Natural killer cell (primary cell): ENCODE measurements at regions of chr16 and their contacts with region 1.

Region 1: DNA sequence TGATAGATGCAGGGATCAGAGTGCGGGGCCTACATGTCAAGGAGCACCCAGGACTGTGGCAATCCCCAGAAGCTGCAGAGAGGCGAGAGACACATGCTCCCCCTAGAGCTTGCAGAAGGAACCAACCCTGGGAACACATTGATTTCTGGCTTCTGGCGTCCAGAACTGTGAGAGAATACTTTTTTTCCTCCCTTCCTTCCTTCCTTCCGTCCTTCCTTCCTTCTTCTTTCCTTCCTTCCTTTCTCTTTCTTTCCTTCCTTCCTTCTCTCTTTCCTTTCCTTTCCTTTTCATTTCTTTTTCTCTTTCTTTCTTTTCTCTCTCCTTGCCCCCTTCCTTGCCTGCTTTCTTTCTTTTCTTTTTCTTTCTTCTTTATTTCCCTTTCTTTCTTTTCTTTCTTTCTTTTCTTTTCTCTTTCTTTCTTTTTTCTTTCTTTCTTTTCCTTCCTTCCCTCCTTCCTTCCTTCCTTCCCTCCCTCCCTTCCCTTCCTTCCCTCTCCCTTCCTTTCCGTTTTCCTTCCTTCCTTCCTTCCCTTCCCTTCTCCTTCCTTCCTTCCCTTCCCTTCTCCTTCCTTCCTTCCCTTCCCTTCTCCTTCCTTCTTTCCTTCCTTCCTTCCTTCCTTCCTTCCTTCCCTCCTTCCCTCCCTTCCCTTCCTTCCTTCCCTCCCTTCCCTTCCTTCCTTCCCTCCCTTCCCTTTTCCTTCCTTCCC is 134.3 kb downstream of the HAPSTR1 start:
- DNase-seq: peak in 1 of 2 donors; percentile 4
- ATAC-seq: no peak
- H3K4me3 ChIP-seq: no peak overlapping the region
- H3K4me3 Mint-ChIP-seq: no peak overlapping the region
- H3K27ac ChIP-seq: no peak overlapping the region
- H3K27ac Mint-ChIP-seq: no peak overlapping the region
- H3K4me1 ChIP-seq: no peaks in the 10 kb centered on the region
- H3K4me1 Mint-ChIP-seq: no peaks in the 10 kb centered on the region
- H3K27me3 ChIP-seq: no peaks in the 10 kb centered on the region
- H3K27me3 Mint-ChIP-seq: peaks cover 0 to 3% of the 10 kb centered on the region in 2 donors
- CTCF ChIP-seq: no peak

Region 2: GRCh38 chr16:7849841-7850240 is 1375.9 kb before region 1 on chr16:
- intact Hi-C with region 1: no loop called
- DNase-seq: no peak
- ATAC-seq: no peak
- H3K4me3 ChIP-seq: no peak overlapping the region
- H3K4me3 Mint-ChIP-seq: no peak overlapping the region
- H3K27ac ChIP-seq: no peak overlapping the region
- H3K27ac Mint-ChIP-seq: no peak overlapping the region
- H3K4me1 ChIP-seq: no peaks in the 10 kb centered on the region
- H3K4me1 Mint-ChIP-seq: no peaks in the 10 kb centered on the region
- H3K27me3 ChIP-seq: no peaks in the 10 kb centered on the region
- H3K27me3 Mint-ChIP-seq: no peaks in the 10 kb centered on the region
- CTCF ChIP-seq: no peak

Region 3: GRCh38 chr16:9159839-9160550 is 65.8 kb before region 1 on chr16:
- intact Hi-C with region 1: loop called (anchors 10 kb)
- DNase-seq: peak; percentile 26 to 67
- ATAC-seq: peak in 1 of 3 donors; percentile 70
- H3K4me3 ChIP-seq: no peak overlapping the region
- H3K4me3 Mint-ChIP-seq: no peak overlapping the region
- H3K27ac ChIP-seq: no peak overlapping the region
- H3K27ac Mint-ChIP-seq: no peak overlapping the region
- H3K4me1 ChIP-seq: peaks cover 7% of the 10 kb centered on the region
- H3K4me1 Mint-ChIP-seq: peaks cover 8% of the 10 kb centered on the region in 2 donors
- H3K27me3 ChIP-seq: peaks cover 2% of the 10 kb centered on the region
- H3K27me3 Mint-ChIP-seq: peaks cover 0 to 6% of the 10 kb centered on the region in 2 donors
- CTCF ChIP-seq: peak; percentile 87

Region 4: DNA sequence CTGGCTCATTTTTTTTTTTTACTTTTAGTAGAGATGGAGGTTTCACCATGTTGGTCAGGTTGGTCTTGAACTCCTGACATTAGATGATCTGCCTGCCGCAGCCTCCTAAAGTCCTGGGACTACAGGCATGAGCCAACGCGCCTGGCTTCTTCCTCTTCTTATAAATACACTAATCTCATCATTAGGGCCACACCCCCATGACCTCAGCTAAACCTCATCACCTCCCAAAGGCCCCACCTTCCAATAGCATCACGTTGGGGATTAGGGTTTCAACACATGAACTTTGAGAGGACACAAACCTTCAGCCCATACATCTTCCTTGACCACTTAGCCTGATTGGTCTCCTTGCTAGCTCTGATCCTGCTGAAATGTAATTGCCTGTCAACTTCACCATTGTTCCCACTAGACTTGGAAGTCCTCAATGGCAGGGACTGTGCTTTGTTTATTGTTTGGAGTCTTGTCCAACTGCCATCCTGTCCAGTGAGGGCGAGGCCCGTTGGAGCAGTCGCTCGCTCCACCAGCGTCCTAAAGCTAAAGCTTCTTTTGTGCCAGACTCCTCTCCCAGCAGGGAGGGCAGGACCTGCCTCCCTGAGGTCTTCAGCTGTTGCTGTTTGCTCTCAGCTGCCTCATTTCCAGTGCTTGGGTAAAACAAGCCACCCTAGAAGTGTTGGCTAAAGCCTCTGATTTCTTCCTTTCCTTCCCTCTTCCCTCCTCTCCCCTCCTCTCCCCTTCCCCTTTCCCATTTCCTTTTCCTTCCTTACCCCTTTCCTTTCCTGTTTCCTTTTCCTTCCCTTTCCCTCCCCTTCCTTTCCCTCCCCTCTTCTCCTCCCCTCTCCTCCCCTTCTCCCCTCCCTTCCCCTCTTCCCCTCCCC is 49.0 kb before region 1 on chr16:
- intact Hi-C with region 1: no loop called
- DNase-seq: no peak
- ATAC-seq: no peak
- H3K4me3 ChIP-seq: no peak overlapping the region
- H3K4me3 Mint-ChIP-seq: no peak overlapping the region
- H3K27ac ChIP-seq: no peak overlapping the region
- H3K27ac Mint-ChIP-seq: no peak overlapping the region
- H3K4me1 ChIP-seq: no peaks in the 10 kb centered on the region
- H3K4me1 Mint-ChIP-seq: no peaks in the 10 kb centered on the region
- H3K27me3 ChIP-seq: no peaks in the 10 kb centered on the region
- H3K27me3 Mint-ChIP-seq: peaks cover 0 to 9% of the 10 kb centered on the region in 2 donors
- CTCF ChIP-seq: no peak